SK-N-SH (cell line): ENCODE measurements at regions of chr17 and their contacts with region 1.

Region 1: GRCh38 chr17:47802341-47803022 is 19.1 kb downstream of the OSBPL7 start:
- DNase-seq: peak; percentile 90
- H3K4me3 ChIP-seq: no peak overlapping the region
- H3K27ac ChIP-seq: no peak overlapping the region
- H3K4me1 ChIP-seq: no peaks in the 10 kb centered on the region
- H3K27me3 ChIP-seq: 0 out of 2 replicates have a peak, but pooled peaks cover 14% of the 10 kb centered on the region
- CTCF ChIP-seq: peak; percentile 78
- EP300 ChIP-seq: no peak
- RAD21 ChIP-seq: peak; percentile 90

Region 2: GRCh38 chr17:47205419-47205963 is 597.0 kb before region 1 on chr17:
- CTCF ChIA-PET with region 1: no interaction called
- POLR2A ChIA-PET with region 1: no interaction called
- DNase-seq: no peak
- H3K4me3 ChIP-seq: no peak overlapping the region
- H3K27ac ChIP-seq: no peak overlapping the region
- H3K4me1 ChIP-seq: no peaks in the 10 kb centered on the region
- H3K27me3 ChIP-seq: no peaks in the 10 kb centered on the region
- CTCF ChIP-seq: no peak
- EP300 ChIP-seq: no peak
- RAD21 ChIP-seq: no peak

Region 3: GRCh38 chr17:47698749-47699535 is 103.5 kb before region 1 on chr17:
- CTCF ChIA-PET with region 1: interaction called, 52 read pairs
- POLR2A ChIA-PET with region 1: no interaction called
- DNase-seq: peak; percentile 98
- H3K4me3 ChIP-seq: no peak overlapping the region; a peak in 1 of 4 replicates
- H3K27ac ChIP-seq: no peak overlapping the region
- H3K4me1 ChIP-seq: peaks cover 5 to 10% of the 10 kb centered on the region in 2 experiments; a peak in 1 of 4 replicates
- H3K27me3 ChIP-seq: no peaks in the 10 kb centered on the region
- CTCF ChIP-seq: peak; percentile 100
- EP300 ChIP-seq: no peak
- RAD21 ChIP-seq: peak; percentile 78

Region 4: GRCh38 chr17:47742319-47743181 is 59.9 kb before region 1 on chr17:
- CTCF ChIA-PET with region 1: interaction called, 11 read pairs
- POLR2A ChIA-PET with region 1: no interaction called
- DNase-seq: peak; percentile 95
- H3K4me3 ChIP-seq: no peak overlapping the region; a peak in 1 of 4 replicates
- H3K27ac ChIP-seq: no peak overlapping the region
- H3K4me1 ChIP-seq: peaks cover 0 to 6% of the 10 kb centered on the region in 2 experiments; a peak in 1 of 4 replicates
- H3K27me3 ChIP-seq: peaks cover 86% of the 10 kb centered on the region
- CTCF ChIP-seq: peak; percentile 61
- EP300 ChIP-seq: no peak
- RAD21 ChIP-seq: peak; percentile 88

Region 5: DNA sequence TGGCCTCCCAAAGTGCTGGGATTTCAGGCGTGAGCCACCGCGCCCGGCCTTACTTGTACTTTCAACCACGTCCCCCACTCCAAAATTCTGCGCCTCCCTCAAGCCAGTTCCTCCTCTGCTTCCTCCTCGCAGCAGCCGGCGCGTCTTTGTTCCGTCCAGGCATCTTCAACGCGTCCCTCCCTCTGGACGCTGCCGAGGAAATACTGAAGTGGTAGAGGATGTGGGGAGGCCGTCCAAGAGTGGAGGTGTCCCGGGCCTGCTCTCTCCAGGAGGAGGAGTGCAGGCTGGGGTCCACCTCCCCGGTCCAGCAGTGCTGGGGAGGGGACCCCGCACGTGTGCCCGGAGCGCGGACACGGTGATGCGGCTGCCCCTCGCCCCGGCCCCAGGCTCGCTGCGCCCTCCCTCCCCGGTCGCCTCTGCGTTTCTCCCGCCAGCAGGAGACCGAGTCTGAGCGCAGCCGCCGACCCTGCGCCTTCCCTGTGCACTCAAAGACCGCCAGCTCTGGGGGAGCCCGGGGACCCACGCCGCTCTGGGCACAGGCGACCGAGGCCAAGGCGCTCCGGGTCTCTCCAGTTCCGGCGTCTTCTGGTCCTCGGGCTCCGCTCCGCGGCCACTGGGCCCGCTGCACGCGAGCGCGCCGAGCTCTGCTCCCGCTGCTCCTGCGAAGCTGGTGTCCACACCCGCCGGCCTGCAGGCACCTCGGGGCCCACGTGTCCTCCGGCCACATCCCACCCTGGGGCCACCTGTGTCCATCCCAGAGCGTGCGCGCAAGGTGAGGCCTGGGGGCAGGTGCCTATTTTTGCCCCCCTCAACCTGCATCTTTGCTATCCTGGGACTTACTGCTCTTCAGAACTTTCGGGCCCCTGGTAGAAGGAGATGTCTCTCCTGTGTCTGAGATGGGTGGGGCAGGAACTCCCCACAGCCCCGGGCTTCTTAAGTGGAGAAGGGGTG is 12.6 kb before region 1 on chr17:
- CTCF ChIA-PET with region 1: interaction called, 38 read pairs
- POLR2A ChIA-PET with region 1: interaction called, 3 read pairs
- DNase-seq: peak; percentile 96
- H3K4me3 ChIP-seq: peak overlapping the region; percentile 43 to 48
- H3K27ac ChIP-seq: 0 out of 4 replicates have a peak overlapping the region, but pooled peaks of 1 of the 2 experiments have one; percentile 2
- H3K4me1 ChIP-seq: peaks cover 0 to 5% of the 10 kb centered on the region in 2 experiments; a peak in 1 of 4 replicates
- H3K27me3 ChIP-seq: peaks cover 73% of the 10 kb centered on the region
- CTCF ChIP-seq: peak; percentile 62
- EP300 ChIP-seq: no peak
- RAD21 ChIP-seq: peak; percentile 81

Region 6: GRCh38 chr17:47924785-47925676 is 122.5 kb after region 1 on chr17:
- CTCF ChIA-PET with region 1: no interaction called
- POLR2A ChIA-PET with region 1: no interaction called
- DNase-seq: no peak
- H3K4me3 ChIP-seq: no peak overlapping the region
- H3K27ac ChIP-seq: no peak overlapping the region
- H3K4me1 ChIP-seq: no peaks in the 10 kb centered on the region
- H3K27me3 ChIP-seq: no peaks in the 10 kb centered on the region
- CTCF ChIP-seq: no peak
- EP300 ChIP-seq: no peak
- RAD21 ChIP-seq: no peak